ENCODE measurements at regions of chr20 and their contacts with region 1.

Region 1: GRCh38 chr20:4985658-4986057 is 15.7 kb downstream of the SLC23A2 start:
- DNase-seq: no peak
- H3K4me3 ChIP-seq: no peak overlapping the region
- H3K27ac ChIP-seq: peak overlapping the region; percentile 31
- H3K27me3 ChIP-seq: no peaks in the 10 kb centered on the region
- CTCF ChIP-seq: no peak

Region 2: DNA sequence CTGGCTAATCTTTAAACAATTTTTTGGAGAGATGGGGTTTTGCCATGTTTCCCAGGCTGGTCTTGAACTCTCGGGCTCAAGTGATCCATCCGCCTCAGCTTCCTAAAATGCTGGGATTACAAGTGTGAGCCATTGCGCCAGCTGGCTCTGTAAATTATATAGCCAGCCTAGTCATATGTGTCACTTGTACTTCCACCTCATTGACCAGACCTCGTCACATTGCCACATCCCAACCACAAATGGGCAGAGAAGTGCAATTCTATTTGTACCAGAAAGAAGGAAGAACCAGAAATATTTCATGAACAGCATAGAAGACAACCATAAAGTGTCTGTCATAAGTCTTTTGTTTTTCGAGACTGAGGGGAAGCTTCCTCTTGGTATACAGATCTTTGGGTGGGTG is 665.4 kb before region 1 on chr20:
- CTCF ChIA-PET with region 1: no interaction called
- POLR2A ChIA-PET with region 1: no interaction called
- DNase-seq: no peak
- H3K4me3 ChIP-seq: no peak overlapping the region
- H3K27ac ChIP-seq: no peak overlapping the region
- H3K27me3 ChIP-seq: peaks cover 7% of the 10 kb centered on the region
- CTCF ChIP-seq: no peak

Region 3: GRCh38 chr20:4973330-4974097 is 12.1 kb before region 1 on chr20:
- CTCF ChIA-PET with region 1: no interaction called
- POLR2A ChIA-PET with region 1: interaction called, 11 read pairs
- DNase-seq: peak; percentile 70
- H3K4me3 ChIP-seq: peak overlapping the region; percentile 37
- H3K27ac ChIP-seq: peak overlapping the region; percentile 94
- H3K27me3 ChIP-seq: no peaks in the 10 kb centered on the region
- CTCF ChIP-seq: no peak